Left ventricle myocardium superior (tissue), 1 donor: ENCODE measurements at regions of chr12 and their contacts with region 1.

Region 1: GRCh38 chr12:48890657-48891418 is 25.2 kb upstream of the RND1 start:
- DNase-seq: peak; percentile 88
- ATAC-seq: peak; percentile 99

Region 2: GRCh38 chr12:48851883-48852733 is 38.7 kb before region 1 on chr12 and contains the start of gene DDX23:
- intact Hi-C with region 1: loop called (anchors 2 kb)
- DNase-seq: peak; percentile 96
- ATAC-seq: peak; percentile 99
- total RNA-seq, gene DDX23: 36.4 TPM